Calu3 (cell line): ENCODE measurements at regions of chr17 and their contacts with region 1.

Region 1: GRCh38 chr17:39845052-39845846 is 18.9 kb downstream of the IKZF3 start:
- DNase-seq: peak; percentile 81
- H3K4me3 Mint-ChIP-seq: no peak overlapping the region
- H3K27ac Mint-ChIP-seq: no peak overlapping the region
- H3K4me1 Mint-ChIP-seq: peaks cover 10% of the 10 kb centered on the region
- H3K27me3 Mint-ChIP-seq: no peaks in the 10 kb centered on the region
- CTCF ChIP-seq: no peak

Region 2: DNA sequence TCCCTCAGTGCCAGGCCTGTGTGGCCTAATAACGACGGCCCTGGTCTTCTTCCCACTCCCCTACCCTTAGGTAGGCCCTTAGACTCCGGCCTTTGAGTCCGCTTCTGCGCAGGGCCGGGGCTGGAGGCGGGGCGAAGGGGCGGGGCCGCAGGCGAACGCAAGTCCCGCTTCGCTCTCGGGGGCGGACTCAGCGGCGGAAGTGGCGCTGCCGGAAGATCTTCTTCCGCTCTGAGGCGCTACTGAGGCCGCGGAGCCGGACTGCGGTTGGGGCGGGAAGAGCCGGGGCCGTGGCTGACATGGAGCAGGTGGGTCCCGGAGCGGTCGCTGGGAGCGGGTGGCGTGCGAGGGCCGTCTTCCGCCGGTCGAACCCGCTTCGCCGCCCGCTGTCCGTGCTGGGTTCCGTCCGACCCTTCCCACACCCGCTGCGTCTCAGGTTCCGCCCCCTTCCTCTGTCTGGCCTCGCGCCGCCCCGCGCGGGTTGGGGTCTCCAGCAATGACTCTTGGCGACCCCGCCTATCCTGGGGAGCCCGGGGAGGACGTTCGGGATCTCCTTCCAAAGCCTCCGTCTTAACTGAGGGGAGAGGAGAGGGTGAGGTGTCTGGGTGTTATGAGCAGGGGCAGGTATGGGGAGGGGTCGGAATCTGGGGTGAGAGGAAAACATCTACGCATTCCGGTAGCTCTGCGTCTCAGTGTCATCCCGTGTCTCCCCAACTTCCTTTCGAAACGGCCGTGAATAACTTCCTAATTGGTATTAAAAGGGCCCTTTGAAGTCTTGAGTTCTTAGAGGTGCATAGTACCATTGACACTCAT is 208.1 kb before region 1 on chr17 and contains the start of gene STARD3:
- CTCF ChIA-PET with region 1: interaction called, 92 read pairs
- intact Hi-C with region 1: no loop called
- DNase-seq: no peak
- H3K4me3 Mint-ChIP-seq: peak within 1 kb of the TSS; percentile 71
- H3K27ac Mint-ChIP-seq: peak within 1 kb of the TSS; percentile 28
- H3K4me1 Mint-ChIP-seq: peaks cover 61% of the 10 kb centered on the region
- H3K27me3 Mint-ChIP-seq: peaks cover 5% of the 10 kb centered on the region
- CTCF ChIP-seq: no peak
- total RNA-seq, gene STARD3: 2,579 and 2,697 TPM in 2 replicates

Region 3: DNA sequence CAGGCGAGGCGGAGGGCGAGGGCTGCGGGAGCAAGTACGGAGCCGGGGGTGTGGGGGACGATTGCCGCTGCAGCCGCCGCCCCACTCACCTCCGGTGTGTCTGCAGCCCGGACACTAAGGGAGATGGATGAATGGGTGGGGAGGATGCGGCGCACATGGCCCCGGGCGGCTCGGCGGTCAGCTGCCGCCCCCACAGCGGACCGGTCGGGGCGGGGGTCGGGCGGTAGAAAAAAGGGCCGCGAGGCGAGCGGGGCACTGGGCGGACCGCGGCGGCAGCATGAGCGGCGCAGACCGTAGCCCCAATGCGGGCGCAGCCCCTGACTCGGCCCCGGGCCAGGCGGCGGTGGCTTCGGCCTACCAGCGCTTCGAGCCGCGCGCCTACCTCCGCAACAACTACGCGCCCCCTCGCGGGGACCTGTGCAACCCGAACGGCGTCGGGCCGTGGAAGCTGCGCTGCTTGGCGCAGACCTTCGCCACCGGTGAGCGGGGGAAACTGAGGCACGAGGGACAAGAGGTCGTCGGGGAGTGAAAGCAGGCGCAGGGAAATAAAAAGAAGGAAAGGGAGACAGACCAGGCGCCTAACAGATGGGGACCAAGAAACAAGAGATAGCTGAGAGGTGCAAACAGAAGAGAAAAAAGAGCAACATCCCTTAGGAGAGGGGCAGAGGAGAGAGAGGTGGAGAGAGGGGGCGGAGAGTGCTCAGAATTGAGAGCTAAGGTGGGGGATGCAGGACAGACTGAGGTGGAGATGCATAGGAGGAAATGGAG is 176.9 kb before region 1 on chr17 and contains the start of gene PNMT:
- CTCF ChIA-PET with region 1: interaction called, 30 read pairs
- intact Hi-C with region 1: no loop called
- DNase-seq: peak; percentile 100
- H3K4me3 Mint-ChIP-seq: peak within 1 kb of the TSS; percentile 24
- H3K27ac Mint-ChIP-seq: peak within 1 kb of the TSS; percentile 0
- H3K4me1 Mint-ChIP-seq: peaks cover 65% of the 10 kb centered on the region
- H3K27me3 Mint-ChIP-seq: peaks cover 69% of the 10 kb centered on the region
- CTCF ChIP-seq: no peak
- total RNA-seq, gene PNMT: 1.3 and 3.2 TPM in 2 replicates

Region 4: DNA sequence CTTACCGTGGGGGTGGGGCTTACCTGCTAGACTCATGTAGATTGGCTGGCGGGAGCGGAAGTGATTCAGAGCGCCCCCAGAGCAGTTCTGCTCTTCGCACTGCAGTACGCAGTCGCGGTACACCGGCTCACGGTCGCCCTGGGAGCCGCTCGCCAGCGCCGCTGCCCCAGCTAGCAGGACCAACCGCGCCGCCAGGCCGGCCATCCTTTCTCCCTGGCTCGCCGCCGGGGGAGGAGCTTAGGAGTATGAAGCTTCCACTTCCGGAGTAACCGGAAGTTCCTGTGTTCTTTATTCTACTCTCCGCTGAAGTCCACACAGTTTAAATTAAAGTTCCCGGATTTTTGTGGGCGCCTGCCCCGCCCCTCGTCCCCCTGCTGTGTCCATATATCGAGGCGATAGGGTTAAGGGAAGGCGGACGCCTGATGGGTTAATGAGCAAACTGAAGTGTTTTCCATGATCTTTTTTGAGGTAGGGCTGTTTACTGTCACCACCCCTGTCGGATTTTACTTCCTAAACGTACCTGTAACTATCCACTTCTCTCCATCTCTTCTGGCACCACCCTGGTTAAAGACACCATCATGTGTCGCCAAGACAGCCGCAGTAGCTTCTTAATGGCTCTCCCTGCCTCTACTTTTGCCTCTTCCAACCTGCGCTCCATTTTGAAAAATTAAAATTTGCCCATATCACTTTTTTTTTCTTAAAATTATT is 157.3 kb before region 1 on chr17 and contains the start of gene PGAP3:
- CTCF ChIA-PET with region 1: interaction called, 26 read pairs
- intact Hi-C with region 1: no loop called
- DNase-seq: peak; percentile 100
- H3K4me3 Mint-ChIP-seq: peak within 1 kb of the TSS; percentile 64
- H3K27ac Mint-ChIP-seq: peak within 1 kb of the TSS; percentile 63
- H3K4me1 Mint-ChIP-seq: peaks cover 27% of the 10 kb centered on the region
- H3K27me3 Mint-ChIP-seq: no peaks in the 10 kb centered on the region
- CTCF ChIP-seq: no peak
- total RNA-seq, gene PGAP3: 1,186 and 1,276 TPM in 2 replicates

Region 5: DNA sequence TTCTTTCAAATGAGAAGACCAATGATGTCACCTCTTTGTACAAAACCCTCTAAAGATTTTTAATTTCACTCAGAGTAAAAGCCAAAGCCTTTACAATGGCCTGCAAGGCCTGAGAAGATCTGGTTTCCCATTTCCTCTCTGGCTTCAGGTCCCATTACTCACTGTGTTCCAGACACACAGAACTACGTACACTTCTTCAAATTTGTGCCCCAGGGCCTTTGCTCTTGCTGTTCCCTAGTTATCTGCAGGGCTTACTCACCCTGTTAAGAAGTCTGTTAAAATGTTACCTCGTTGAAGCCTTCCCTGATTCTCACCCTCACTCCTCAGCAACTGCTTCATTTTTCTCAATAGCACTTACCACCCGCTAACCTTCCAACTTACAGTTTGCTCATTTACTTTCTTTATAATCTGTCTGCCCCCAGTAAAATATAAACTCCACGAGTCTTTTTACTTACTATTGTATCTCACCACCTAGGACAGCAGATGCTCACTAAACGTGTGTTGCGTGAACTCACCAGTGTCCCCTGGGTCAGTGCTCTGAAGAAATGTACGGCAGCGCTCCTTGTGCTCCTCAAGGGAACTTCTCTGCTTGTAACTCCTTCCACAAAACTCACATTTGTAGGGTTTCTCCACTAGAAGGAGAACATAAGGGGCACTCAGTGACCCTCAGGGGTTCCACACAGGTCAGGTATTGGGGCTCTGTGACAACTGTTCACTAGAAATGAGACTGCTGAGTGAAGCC is 57.3 kb before region 1 on chr17:
- CTCF ChIA-PET with region 1: interaction called, 543 read pairs
- intact Hi-C with region 1: no loop called
- DNase-seq: peak; percentile 80
- H3K4me3 Mint-ChIP-seq: no peak overlapping the region
- H3K27ac Mint-ChIP-seq: no peak overlapping the region
- H3K4me1 Mint-ChIP-seq: peaks cover 29% of the 10 kb centered on the region
- H3K27me3 Mint-ChIP-seq: no peaks in the 10 kb centered on the region
- CTCF ChIP-seq: no peak

Region 6: DNA sequence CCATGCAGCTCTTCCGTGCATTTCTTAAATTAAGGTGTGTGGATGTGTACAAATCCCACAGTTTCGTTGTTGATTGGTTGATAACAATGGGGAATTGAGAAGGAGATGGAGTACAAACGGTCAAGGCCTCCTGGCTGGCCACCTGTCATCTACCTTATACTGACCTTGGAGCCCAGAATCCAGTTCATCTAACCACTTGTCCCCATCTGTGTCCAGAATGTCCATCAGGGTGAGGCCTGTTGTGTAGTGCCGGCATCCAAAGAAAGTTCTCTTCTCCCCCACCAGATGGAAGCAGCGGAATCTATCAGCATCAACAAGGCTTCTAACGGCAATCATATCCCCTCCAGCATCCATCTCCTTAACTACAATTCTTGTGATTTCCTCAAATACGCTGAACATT is 71.7 kb after region 1 on chr17:
- CTCF ChIA-PET with region 1: interaction called, 159 read pairs
- intact Hi-C with region 1: no loop called
- DNase-seq: peak; percentile 94
- H3K4me3 Mint-ChIP-seq: no peak overlapping the region
- H3K27ac Mint-ChIP-seq: no peak overlapping the region
- H3K4me1 Mint-ChIP-seq: peaks cover 24% of the 10 kb centered on the region
- H3K27me3 Mint-ChIP-seq: no peaks in the 10 kb centered on the region
- CTCF ChIP-seq: no peak

Region 7: GRCh38 chr17:39939588-39940419 is 94.6 kb after region 1 on chr17:
- CTCF ChIA-PET with region 1: interaction called, 1,809 read pairs
- intact Hi-C with region 1: no loop called
- DNase-seq: peak; percentile 76
- H3K4me3 Mint-ChIP-seq: no peak overlapping the region
- H3K27ac Mint-ChIP-seq: no peak overlapping the region
- H3K4me1 Mint-ChIP-seq: peaks cover 12% of the 10 kb centered on the region
- H3K27me3 Mint-ChIP-seq: peaks cover 63% of the 10 kb centered on the region
- CTCF ChIP-seq: no peak

Region 8: GRCh38 chr17:40287494-40288369 is 442.5 kb after region 1 on chr17 and contains the start of gene CDC6:
- CTCF ChIA-PET with region 1: no interaction called
- intact Hi-C with region 1: no loop called
- DNase-seq: peak; percentile 100
- H3K4me3 Mint-ChIP-seq: peak within 1 kb of the TSS; percentile 83
- H3K27ac Mint-ChIP-seq: peak within 1 kb of the TSS; percentile 90
- H3K4me1 Mint-ChIP-seq: peaks cover 71% of the 10 kb centered on the region
- H3K27me3 Mint-ChIP-seq: no peaks in the 10 kb centered on the region
- CTCF ChIP-seq: no peak
- total RNA-seq, gene CDC6: 567 and 645 TPM in 2 replicates